ENCODE measurements at regions of chr7 and their contacts with region 1.

Region 1: GRCh38 chr7:39616138-39616537 is 7.2 kb upstream of the RALA start:
- DNase-seq: no peak
- H3K4me3 ChIP-seq: no peak overlapping the region
- H3K27ac ChIP-seq: no peak overlapping the region
- H3K4me1 ChIP-seq: no peaks in the 10 kb centered on the region
- H3K27me3 ChIP-seq: peaks cover 0 to 9% of the 10 kb centered on the region in 2 donors
- CTCF ChIP-seq: no peak

Region 2: GRCh38 chr7:39130857-39131526 is 485.1 kb before region 1 on chr7:
- intact Hi-C with region 1: no loop called
- DNase-seq: no peak
- H3K4me3 ChIP-seq: no peak overlapping the region
- H3K27ac ChIP-seq: no peak overlapping the region
- H3K4me1 ChIP-seq: no peaks in the 10 kb centered on the region
- H3K27me3 ChIP-seq: no peaks in the 10 kb centered on the region
- CTCF ChIP-seq: no peak

Region 3: DNA sequence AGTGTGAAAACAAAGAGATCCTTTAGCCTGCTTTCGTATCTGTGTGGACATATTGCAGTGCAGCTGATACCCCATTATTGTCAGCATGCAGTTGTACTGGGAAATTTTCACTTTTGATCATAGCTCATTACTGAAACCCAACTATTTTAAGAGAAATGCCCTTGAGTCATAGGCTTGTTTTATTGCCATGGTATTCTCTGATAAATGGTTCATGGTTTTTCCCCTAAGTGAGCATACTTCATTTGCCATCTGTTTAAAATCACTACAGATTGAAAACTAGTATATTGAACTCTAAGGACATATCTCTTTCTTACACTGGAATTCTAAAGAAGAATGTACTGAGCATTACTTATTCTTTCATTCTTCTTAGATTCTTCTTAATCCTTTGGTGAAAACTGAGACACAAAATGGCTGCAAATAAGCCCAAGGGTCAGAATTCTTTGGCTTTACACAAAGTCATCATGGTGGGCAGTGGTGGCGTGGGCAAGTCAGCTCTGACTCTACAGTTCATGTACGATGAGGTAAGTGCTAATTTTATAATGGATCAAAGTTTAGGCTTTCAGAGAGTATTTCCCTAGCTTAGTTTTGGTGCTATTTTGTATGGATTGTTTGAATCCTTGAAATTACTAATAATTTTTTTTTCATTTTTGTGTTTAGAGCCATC is 70.3 kb after region 1 on chr7:
- intact Hi-C with region 1: loop called (anchors 10 kb)
- DNase-seq: no peak
- H3K4me3 ChIP-seq: no peak overlapping the region
- H3K27ac ChIP-seq: no peak overlapping the region
- H3K4me1 ChIP-seq: peaks cover 0 to 23% (median 11%) of the 10 kb centered on the region in 4 donors
- H3K27me3 ChIP-seq: no peaks in the 10 kb centered on the region
- CTCF ChIP-seq: no peak